ENCODE measurements at regions of chr1 and their contacts with region 1.

Region 1: DNA sequence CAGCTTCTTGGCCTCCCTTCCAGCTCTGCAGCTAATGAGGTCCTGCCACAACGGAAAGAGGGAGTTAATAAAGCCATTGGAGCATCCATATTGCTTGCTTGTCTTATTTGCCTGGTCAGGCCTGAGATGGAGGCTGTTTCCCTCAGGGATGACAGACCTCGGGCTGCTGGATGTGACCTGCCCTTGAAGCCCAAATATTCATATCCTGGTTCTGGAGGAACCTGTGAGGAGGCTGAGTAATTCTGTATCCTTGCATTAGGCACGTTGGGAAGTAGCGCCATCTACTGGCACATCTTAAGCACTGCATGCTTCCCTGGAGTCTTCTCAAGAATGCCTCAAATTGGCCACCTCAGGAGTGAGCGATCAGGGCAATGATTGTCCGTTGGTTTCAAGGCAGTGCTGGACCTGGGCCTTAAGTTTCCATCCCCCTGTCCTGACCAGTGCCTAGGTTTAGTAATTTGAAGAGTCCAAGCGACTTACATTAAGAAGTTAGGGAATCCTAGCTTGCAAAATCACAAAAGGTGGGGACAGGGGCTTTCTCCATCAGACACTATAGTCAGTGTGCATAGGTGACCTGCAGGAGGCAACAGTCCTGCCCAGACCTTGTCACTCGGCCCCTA is 13.8 kb upstream of the NASP start:
- DNase-seq: peak; percentile 83
- ATAC-seq: peak; percentile 90
- H3K4me3 Mint-ChIP-seq: no peak overlapping the region
- H3K27ac Mint-ChIP-seq: no peak overlapping the region
- H3K4me1 Mint-ChIP-seq: no peaks in the 10 kb centered on the region
- H3K27me3 Mint-ChIP-seq: no peaks in the 10 kb centered on the region

Region 2: DNA sequence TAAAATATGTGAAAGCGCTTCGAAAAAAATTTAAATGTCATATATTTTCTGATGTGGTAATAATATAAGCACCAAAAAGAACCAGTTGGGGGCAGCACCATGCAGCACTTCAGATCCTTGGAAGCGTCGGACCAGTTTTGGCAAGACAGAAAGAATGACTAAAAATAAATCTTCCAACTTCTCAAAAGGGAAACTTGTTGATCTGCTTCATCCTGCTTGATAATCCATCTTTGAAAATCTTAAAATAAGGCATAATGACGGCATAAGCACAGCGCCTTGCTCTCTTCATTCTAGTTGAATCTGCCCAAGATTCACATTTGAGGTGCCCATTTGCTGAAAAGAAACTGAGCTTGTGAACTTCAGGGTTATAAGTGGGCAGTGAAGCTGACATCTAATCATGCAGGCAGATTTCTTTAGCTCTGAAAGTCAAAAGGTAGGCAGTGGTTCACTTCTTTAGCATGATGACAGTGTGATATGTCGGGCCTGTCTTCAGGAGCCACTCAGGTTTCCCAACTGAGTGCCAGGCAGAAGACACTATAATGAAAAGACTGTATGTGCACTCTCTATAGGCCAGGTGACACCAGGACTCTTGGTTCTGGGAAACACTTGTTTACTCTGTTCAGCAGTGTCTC is 210.1 kb before region 1 on chr1:
- CTCF ChIA-PET with region 1: interaction called, 20 read pairs
- POLR2A ChIA-PET with region 1: no interaction called
- DNase-seq: peak; percentile 68
- ATAC-seq: peak; percentile 74
- H3K4me3 Mint-ChIP-seq: no peak overlapping the region
- H3K27ac Mint-ChIP-seq: no peak overlapping the region
- H3K4me1 Mint-ChIP-seq: peaks cover 6% of the 10 kb centered on the region
- H3K27me3 Mint-ChIP-seq: no peaks in the 10 kb centered on the region

Region 3: DNA sequence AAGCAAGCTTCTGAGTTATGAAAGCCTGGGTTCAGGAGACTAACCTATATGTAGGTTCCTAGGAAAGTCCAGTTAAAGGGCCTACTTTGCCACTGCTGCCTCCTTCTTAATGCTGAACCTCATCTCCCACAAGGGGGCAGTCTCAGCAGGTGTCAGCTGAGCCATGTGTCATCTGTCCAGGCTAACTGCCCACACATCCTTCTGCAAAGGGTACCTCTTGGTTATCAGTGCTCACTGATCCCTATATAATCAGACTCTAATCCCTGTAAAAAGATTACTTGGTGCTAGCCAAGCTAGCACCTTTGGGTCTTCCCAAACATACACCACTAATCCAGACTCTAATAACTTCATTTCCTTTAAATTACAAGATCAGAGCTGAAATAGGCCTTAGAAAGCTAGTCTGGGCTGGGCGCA is 57.4 kb before region 1 on chr1:
- CTCF ChIA-PET with region 1: interaction called, 194 read pairs
- POLR2A ChIA-PET with region 1: interaction called, 3 read pairs
- DNase-seq: peak; percentile 75
- ATAC-seq: peak; percentile 74
- H3K4me3 Mint-ChIP-seq: no peak overlapping the region
- H3K27ac Mint-ChIP-seq: no peak overlapping the region
- H3K4me1 Mint-ChIP-seq: no peaks in the 10 kb centered on the region
- H3K27me3 Mint-ChIP-seq: no peaks in the 10 kb centered on the region

Region 4: GRCh38 chr1:45550401-45551351 is 19.4 kb before region 1 on chr1 and contains the start of gene AKR1A1:
- CTCF ChIA-PET with region 1: interaction called, 22 read pairs
- POLR2A ChIA-PET with region 1: interaction called, 6 read pairs
- DNase-seq: peak; percentile 90
- ATAC-seq: peak; percentile 96
- H3K4me3 Mint-ChIP-seq: peak within 1 kb of the TSS; percentile 94
- H3K27ac Mint-ChIP-seq: peak within 1 kb of the TSS; percentile 91
- H3K4me1 Mint-ChIP-seq: peaks cover 25% of the 10 kb centered on the region
- H3K27me3 Mint-ChIP-seq: no peaks in the 10 kb centered on the region
- total RNA-seq, gene AKR1A1: 150 to 152 TPM

Region 5: GRCh38 chr1:45583264-45583665 is 13.2 kb after region 1 on chr1:
- CTCF ChIA-PET with region 1: interaction called, 59 read pairs
- POLR2A ChIA-PET with region 1: interaction called, 11 read pairs
- DNase-seq: peak; percentile 97
- ATAC-seq: peak; percentile 75
- H3K4me3 Mint-ChIP-seq: peak overlapping the region; percentile 99
- H3K27ac Mint-ChIP-seq: peak overlapping the region; percentile 100
- H3K4me1 Mint-ChIP-seq: peaks cover 26% of the 10 kb centered on the region
- H3K27me3 Mint-ChIP-seq: no peaks in the 10 kb centered on the region